ENCODE measurements at regions of chr5 and their contacts with region 1.

Region 1: DNA sequence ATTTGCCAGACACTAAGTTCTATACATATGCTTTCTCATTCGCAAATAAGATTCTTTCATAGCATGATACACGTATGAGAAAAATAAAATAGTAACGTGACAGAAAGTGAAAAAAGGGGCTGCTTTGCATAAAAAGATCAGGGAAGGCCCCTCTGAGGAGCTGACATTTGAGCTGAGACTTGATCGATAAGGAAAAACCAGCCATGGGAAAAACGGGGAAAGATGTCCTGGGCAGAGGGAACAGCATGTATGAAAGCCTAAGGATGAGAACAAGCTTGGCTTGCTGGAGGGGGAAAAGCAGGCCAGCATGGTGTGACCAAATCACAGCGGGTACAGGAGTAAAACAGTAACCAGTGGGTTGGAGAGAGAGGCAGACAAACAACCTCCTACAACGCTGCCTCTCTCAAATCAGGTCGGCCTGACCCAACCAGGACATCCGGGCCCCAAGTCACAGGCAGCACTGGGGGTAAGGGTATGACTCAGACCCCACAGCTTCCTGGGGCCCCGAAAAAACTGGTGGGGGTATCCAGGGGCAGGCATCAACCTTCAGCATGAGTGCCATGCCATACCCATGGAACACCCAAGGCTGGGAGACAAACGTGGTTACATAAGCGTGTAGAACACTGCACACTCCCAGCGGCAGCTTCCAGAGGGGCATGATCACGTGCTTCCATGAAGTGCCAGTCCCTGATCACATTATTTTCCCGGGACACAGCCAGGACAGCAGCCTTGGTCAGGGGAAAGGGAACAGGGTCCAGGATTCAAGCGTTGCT is 2.2 kb downstream of the TNIP1 start:
- DNase-seq: no peak
- ATAC-seq: peak in 2 of 8 donors; percentile 6 to 30
- H3K4me3 ChIP-seq: peak overlapping the region in 2 of 10 donors; percentile 5 to 98
- H3K27ac ChIP-seq: peak overlapping the region in 9 of 10 donors; percentile 18 to 100 (median 42)
- H3K4me1 ChIP-seq: peaks cover 10 to 75% (median 67%) of the 10 kb centered on the region in 9 donors
- H3K27me3 ChIP-seq: no peaks in the 10 kb centered on the region
- CTCF ChIP-seq: no peak

Region 2: DNA sequence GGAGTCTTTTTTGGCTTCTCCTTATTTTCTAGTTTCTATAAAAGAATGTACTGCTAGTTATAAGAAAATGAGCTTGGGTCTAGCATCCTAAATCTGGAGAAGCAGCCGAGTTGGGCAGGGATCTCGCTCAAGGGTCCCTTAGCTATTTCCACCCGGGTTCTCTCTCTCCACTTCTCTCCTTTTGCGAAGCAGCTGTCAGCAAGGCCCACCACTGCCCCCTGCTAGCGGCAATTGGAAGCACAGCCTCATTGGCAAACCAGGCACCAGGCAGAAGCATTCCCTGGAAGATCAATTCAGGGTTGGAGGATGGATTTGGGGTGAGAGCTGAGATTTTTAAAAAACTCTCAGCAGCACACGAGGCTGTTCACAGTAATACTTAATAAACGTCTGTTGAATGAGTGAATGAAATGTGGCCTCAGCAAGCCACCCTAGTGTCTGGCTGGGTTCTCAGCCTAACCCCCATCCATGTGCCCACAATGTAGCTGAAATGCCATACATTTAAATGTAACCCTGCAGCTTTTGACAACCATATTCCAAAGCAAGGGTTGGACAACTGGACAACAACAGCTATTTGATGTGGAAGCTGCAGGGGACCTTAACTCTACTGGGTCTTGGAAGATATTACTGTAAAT is 36.7 kb after region 1 on chr5:
- intact Hi-C with region 1: loop called in 1 of 10 experiments (anchors 2 kb)
- DNase-seq: peak; percentile 78 to 81
- ATAC-seq: peak in 6 of 8 donors; percentile 67 to 74 (median 70)
- H3K4me3 ChIP-seq: no peak overlapping the region
- H3K27ac ChIP-seq: peak overlapping the region in 1 of 10 donors; percentile 2
- H3K4me1 ChIP-seq: peaks cover 0 to 21% (median 8%) of the 10 kb centered on the region in 9 donors
- H3K27me3 ChIP-seq: no peaks in the 10 kb centered on the region
- CTCF ChIP-seq: peak; percentile 87 to 99 (median 96)

Region 3: GRCh38 chr5:151463137-151464029 is 384.7 kb after region 1 on chr5:
- intact Hi-C with region 1: no loop called
- DNase-seq: no peak
- ATAC-seq: no peak
- H3K4me3 ChIP-seq: no peak overlapping the region
- H3K27ac ChIP-seq: no peak overlapping the region
- H3K4me1 ChIP-seq: no peaks in the 10 kb centered on the region
- H3K27me3 ChIP-seq: no peaks in the 10 kb centered on the region
- CTCF ChIP-seq: peak in 4 of 9 donors; percentile 7 to 29 (median 23)

Region 4: GRCh38 chr5:152202321-152202720 is 1123.6 kb after region 1 on chr5:
- intact Hi-C with region 1: no loop called
- DNase-seq: no peak
- ATAC-seq: no peak
- H3K4me3 ChIP-seq: no peak overlapping the region
- H3K27ac ChIP-seq: no peak overlapping the region
- H3K4me1 ChIP-seq: no peaks in the 10 kb centered on the region
- H3K27me3 ChIP-seq: no peaks in the 10 kb centered on the region
- CTCF ChIP-seq: no peak